RWPE1 (cell line): ENCODE measurements at regions of chr1 and their contacts with region 1.

Region 1: DNA sequence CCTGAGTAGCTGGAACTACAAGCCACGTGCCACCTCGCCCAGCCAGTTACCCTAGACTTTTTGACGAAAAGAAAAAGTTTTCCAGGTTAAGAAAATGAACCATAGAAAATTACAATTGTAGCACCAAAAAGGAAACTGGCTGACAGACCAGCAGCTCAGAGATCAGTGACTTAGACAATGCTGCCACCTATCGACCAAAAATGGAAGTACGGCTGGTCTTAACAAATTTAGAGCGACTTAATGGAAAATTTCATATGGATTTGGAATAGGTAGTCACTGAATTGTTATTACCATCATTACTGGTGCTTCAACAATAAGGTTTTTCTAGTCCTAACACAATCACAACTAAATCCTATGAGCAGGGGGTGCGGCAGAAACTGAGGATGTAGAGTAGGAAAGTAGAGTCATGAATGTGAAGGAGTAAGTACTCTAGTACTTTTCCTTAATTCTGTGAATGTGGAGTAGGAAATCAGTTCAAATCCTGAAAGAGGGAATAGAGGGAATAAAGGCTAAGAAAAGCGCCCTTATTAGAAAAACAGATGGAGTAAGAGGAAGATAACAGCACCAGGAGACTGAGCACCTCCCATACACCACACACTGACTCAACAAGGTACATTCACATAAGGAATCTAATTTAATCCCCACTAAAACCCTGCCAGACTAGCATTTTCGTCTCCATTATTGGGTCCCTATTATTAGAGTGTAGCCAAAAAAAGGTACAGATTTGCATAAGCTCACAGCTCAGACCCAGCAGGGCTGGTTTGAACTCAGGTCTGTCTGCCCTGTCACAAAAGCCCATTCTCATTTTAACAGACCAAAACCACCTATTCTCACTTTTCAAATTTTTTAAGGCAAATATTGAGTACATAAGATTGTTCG is 37.9 kb upstream of the MGST3 start:
- DNase-seq: peak; percentile 50
- H3K27ac ChIP-seq: no peak overlapping the region
- CTCF ChIP-seq: peak; percentile 88

Region 2: DNA sequence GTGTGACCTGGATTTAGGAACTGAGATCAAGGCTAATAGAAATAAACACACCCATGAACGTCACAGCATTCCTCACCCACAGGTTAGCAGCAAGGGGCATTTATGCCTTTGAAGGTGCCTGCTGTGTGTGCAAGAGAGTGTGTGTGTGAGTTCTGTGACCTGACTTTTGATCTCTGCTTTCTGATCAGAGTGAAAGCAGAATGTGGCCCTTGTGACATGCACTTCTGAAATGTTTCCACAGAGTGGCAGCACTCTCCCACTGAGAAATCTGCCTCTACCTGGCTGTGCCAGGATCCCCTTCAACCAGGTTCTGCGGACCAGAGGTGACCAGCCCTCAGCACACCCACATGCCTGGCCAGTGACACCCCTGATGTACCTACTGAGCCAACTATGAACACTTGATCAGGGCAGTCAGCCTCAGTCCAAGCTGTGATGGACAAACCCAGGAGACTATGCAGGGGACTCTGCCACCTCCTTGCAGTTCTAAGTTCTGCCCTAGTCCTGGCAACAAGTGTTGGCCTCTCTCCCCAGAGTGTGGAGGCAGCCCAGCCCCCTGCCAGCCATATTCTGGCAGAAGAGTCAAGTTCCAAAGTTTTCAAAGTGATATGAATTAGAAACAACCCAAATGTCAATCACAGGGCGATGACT is 189.2 kb before region 1 on chr1:
- CTCF ChIA-PET with region 1: interaction called, 18 read pairs
- POLR2A ChIA-PET with region 1: no interaction called
- DNase-seq: peak; percentile 50
- H3K27ac ChIP-seq: no peak overlapping the region
- CTCF ChIP-seq: peak; percentile 53